ENCODE measurements at regions of chr11 and their contacts with region 1.

Region 1: GRCh38 chr11:112113539-112114457 is 27.1 kb downstream of the SDHD start:
- DNase-seq: no peak
- ATAC-seq: peak in 6 of 8 donors; percentile 42 to 74 (median 72)
- H3K4me3 ChIP-seq: peak overlapping the region in 1 of 10 donors; percentile 10
- H3K27ac ChIP-seq: peak overlapping the region in 1 of 10 donors; percentile 11
- H3K4me1 ChIP-seq: peaks cover 0 to 6% (median 0%) of the 10 kb centered on the region in 9 donors
- H3K27me3 ChIP-seq: no peaks in the 10 kb centered on the region
- CTCF ChIP-seq: peak; percentile 40 to 79 (median 65)

Region 2: DNA sequence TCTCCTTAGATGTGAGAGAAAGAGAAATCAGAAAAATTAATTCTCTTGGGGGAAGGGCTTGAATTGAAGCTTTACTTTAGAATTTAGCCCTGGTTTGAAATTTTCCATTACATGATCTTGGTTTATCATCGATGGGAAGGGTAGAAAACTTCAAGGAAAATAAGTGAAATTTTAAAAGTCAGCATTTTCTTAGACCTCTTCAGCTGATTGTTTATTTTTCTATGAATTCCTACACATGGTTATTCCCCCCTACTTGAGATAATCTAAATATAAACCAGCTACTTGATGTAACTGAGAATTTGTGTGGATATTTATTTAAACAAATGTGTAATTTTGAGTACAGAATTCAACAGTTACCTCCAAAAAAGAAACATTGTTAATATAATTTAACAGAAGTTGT is 50.9 kb before region 1 on chr11:
- intact Hi-C with region 1: no loop called
- DNase-seq: no peak
- ATAC-seq: no peak
- H3K4me3 ChIP-seq: no peak overlapping the region
- H3K27ac ChIP-seq: no peak overlapping the region
- H3K4me1 ChIP-seq: no peaks in the 10 kb centered on the region
- H3K27me3 ChIP-seq: no peaks in the 10 kb centered on the region
- CTCF ChIP-seq: no peak

Region 3: DNA sequence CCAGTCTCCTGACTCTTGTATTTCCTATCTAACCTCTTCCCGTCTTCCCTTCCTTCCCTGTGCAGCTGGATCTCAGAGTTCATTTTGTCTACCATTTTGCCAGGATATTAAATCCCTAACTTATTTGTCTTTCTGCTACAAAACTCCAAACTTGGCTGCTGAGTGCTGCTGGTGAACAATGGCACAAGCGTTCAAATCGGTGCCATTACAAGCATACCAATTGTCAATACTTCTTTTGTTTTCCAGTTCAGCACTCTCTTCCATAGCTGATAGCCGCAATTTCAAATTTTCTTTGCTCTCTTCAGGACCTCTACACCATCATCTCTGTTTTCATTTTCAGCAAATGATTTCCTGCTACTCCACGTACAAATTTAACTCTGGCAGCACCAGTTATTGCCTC is 36.7 kb after region 1 on chr11:
- intact Hi-C with region 1: loop called in 2 of 10 experiments (anchors 1 to 5 kb)
- DNase-seq: no peak
- ATAC-seq: no peak
- H3K4me3 ChIP-seq: no peak overlapping the region
- H3K27ac ChIP-seq: no peak overlapping the region
- H3K4me1 ChIP-seq: no peaks in the 10 kb centered on the region
- H3K27me3 ChIP-seq: no peaks in the 10 kb centered on the region
- CTCF ChIP-seq: no peak

Region 4: DNA sequence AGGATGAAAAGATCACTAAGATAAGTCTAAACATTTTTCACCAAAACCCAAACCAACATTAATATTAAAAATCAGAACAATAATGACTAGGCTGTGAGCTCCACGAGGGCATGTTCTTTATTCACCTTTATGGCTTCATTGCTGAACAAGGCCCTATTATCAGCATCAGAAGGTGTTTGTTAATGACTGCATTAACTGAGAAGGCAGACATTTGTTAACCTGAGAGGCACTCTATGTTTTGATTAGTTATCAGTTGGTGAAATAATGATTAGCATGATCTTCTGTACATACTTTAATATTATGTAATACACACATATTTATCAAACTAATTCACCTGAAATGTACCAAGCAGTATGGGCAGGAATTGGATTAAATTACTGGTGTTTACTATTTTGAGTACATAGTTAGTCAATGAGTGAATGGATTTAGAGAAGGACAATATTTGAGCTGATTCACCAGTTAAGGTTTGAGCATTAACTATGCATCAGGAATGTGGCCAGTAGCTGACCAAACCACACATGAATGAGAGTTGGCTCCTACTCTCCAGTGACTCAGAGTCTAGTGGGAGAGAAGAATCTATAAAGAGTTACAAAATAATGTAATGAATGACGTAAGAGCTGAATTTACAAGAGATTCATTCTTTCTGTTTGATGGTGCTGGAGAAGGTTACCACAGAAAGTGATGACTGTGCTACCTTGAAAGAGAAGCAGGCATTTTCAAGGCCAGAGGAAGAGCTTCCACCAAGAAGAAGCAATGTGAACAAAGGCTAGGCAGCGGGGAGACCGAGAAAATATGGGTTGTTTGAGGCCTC is 43.4 kb after region 1 on chr11:
- intact Hi-C with region 1: loop called in 1 of 10 experiments (anchors 5 kb)
- DNase-seq: no peak
- ATAC-seq: peak in 4 of 8 donors; percentile 39 to 92 (median 48)
- H3K4me3 ChIP-seq: no peak overlapping the region
- H3K27ac ChIP-seq: peak overlapping the region in 1 of 10 donors; percentile 17
- H3K4me1 ChIP-seq: peaks cover 0 to 38% (median 0%) of the 10 kb centered on the region in 9 donors
- H3K27me3 ChIP-seq: no peaks in the 10 kb centered on the region
- CTCF ChIP-seq: no peak

Region 5: GRCh38 chr11:112174789-112175598 is 61.2 kb after region 1 on chr11 and contains the start of gene BCO2:
- intact Hi-C with region 1: loop called in 8 of 10 experiments (anchors 2 to 10 kb)
- DNase-seq: peak; percentile 74 to 90
- ATAC-seq: peak; percentile 93 to 97 (median 95)
- H3K4me3 ChIP-seq: peak within 1 kb of the TSS; percentile 23 to 60 (median 46)
- H3K27ac ChIP-seq: peak within 1 kb of the TSS; percentile 19 to 84 (median 77)
- H3K4me1 ChIP-seq: peaks cover 0 to 33% (median 9%) of the 10 kb centered on the region in 9 donors
- H3K27me3 ChIP-seq: no peaks in the 10 kb centered on the region
- CTCF ChIP-seq: peak; percentile 58 to 90 (median 81)
- total RNA-seq, gene BCO2: 46.2 to 137 (median 86.5) TPM

Region 6: DNA sequence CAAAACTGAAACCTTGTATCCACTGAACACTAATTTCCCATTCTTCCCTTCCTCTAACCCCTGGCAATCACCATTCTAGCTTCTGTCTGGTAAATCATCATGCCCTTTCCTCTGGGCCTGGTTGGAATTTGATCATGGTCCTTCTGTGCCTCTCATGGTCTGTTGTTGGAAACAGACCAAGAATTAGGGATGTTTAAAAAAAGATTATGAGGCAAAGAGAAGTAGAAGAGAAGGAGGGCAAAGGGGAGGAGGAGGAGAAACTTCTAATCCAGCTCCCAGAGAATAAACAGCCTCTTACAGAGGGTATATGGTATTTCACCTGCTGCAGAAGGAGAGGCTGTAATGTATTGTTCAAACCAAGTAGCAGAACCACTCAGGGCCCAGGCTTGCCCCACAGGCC is 72.1 kb after region 1 on chr11:
- intact Hi-C with region 1: no loop called
- DNase-seq: no peak
- ATAC-seq: peak; percentile 34 to 88 (median 73)
- H3K4me3 ChIP-seq: no peak overlapping the region
- H3K27ac ChIP-seq: peak overlapping the region; percentile 41 to 86 (median 80)
- H3K4me1 ChIP-seq: peaks cover 0 to 28% (median 0%) of the 10 kb centered on the region in 9 donors
- H3K27me3 ChIP-seq: no peaks in the 10 kb centered on the region
- CTCF ChIP-seq: no peak

Region 7: GRCh38 chr11:112280268-112281126 is 166.7 kb after region 1 on chr11:
- intact Hi-C with region 1: loop called in 8 of 10 experiments (anchors 2 to 10 kb)
- DNase-seq: peak in 1 of 2 donors; percentile 70
- ATAC-seq: peak; percentile 81 to 96 (median 90)
- H3K4me3 ChIP-seq: peak overlapping the region; percentile 8 to 67 (median 54)
- H3K27ac ChIP-seq: peak overlapping the region in 6 of 10 donors; percentile 5 to 64 (median 38)
- H3K4me1 ChIP-seq: peaks cover 0 to 8% (median 5%) of the 10 kb centered on the region in 9 donors
- H3K27me3 ChIP-seq: no peaks in the 10 kb centered on the region
- CTCF ChIP-seq: peak; percentile 48 to 72 (median 66)

Measured in heart right ventricle (tissue), 16 donors.